Caco-2 (cell line): ENCODE measurements at regions of chr3 and their contacts with region 1.

Region 1: GRCh38 chr3:124627501-124627908 is 102.7 kb upstream of the UMPS start:
- DNase-seq: peak; percentile 81 to 89
- H3K4me3 ChIP-seq: no peak overlapping the region
- H3K4me3 Mint-ChIP-seq: peak overlapping the region; percentile 46
- H3K27ac Mint-ChIP-seq: peak overlapping the region; percentile 62
- H3K4me1 ChIP-seq: peaks cover 70% of the 10 kb centered on the region
- H3K4me1 Mint-ChIP-seq: peaks cover 60% of the 10 kb centered on the region
- H3K27me3 ChIP-seq: no peaks in the 10 kb centered on the region
- H3K27me3 Mint-ChIP-seq: no peaks in the 10 kb centered on the region
- CTCF ChIP-seq: no peak

Region 2: DNA sequence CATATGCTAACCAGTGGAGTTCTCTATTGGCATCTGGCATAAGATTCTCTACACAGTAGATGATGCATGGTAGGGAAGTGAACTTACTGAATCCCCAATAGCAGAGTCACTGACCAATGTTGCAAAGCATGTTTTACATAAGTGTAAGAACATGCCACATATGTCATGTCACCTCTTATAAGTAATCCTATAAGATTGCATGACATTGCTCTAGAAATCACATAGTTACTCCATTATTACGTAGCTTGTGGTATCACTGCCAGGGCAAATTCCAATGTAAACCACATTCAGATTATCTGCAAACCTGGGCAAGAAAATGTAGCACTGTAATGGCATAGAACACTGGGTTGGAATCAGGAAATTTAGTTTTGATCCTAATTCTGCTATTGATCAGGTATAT is 95.4 kb before region 1 on chr3:
- CTCF ChIA-PET with region 1: no interaction called
- POLR2A ChIA-PET with region 1: no interaction called
- intact Hi-C with region 1: no loop called
- DNase-seq: no peak
- H3K4me3 ChIP-seq: no peak overlapping the region
- H3K4me3 Mint-ChIP-seq: no peak overlapping the region
- H3K27ac Mint-ChIP-seq: no peak overlapping the region
- H3K4me1 ChIP-seq: no peaks in the 10 kb centered on the region
- H3K4me1 Mint-ChIP-seq: no peaks in the 10 kb centered on the region
- H3K27me3 ChIP-seq: no peaks in the 10 kb centered on the region
- H3K27me3 Mint-ChIP-seq: peaks cover 5% of the 10 kb centered on the region
- CTCF ChIP-seq: no peak

Region 3: DNA sequence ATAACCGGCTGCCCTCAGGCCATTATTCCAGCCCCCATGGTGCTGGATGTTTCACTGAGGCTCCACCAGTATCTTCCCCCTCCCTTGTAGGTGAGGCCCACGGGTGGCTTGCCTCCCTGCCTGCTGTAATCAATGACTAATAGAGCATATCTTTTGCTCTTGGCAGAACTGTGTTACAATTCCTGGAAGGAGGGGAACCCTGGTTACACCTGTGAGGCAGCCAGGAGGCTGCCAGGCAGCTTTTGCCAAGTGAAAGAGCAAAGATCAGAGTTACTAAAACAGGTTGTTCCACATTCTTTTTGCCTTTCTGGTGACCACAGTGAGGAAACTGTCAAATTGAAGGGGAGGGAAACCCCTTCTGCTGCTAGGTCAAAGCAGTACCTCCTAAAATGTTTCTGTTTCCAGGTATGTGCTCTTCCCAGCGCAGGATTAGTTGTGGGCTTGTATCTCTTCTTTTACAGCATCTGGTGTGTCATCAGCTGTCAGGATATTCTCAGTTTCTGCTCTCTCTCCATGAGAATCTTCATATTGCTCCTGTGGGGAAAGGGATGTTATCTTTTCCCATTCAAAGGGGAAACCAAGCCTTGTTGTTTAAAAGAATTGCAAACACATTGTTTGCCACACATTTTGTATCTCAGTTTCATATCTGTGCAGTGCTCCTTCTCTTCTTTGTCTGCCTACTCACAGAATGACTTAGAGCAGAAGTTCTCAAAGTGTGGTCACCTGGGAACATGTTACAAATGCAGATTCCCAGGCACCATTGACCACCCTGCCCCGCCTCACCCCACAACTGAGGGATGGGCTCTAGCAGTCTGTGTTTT is 34.7 kb before region 1 on chr3:
- CTCF ChIA-PET with region 1: no interaction called
- POLR2A ChIA-PET with region 1: no interaction called
- intact Hi-C with region 1: loop called (anchors 1 kb)
- DNase-seq: peak; percentile 89 to 91
- H3K4me3 ChIP-seq: no peak overlapping the region
- H3K4me3 Mint-ChIP-seq: peak overlapping the region; percentile 69
- H3K27ac Mint-ChIP-seq: peak overlapping the region; percentile 95
- H3K4me1 ChIP-seq: peaks cover 70% of the 10 kb centered on the region
- H3K4me1 Mint-ChIP-seq: peaks cover 49% of the 10 kb centered on the region
- H3K27me3 ChIP-seq: no peaks in the 10 kb centered on the region
- H3K27me3 Mint-ChIP-seq: no peaks in the 10 kb centered on the region
- CTCF ChIP-seq: no peak

Region 4: DNA sequence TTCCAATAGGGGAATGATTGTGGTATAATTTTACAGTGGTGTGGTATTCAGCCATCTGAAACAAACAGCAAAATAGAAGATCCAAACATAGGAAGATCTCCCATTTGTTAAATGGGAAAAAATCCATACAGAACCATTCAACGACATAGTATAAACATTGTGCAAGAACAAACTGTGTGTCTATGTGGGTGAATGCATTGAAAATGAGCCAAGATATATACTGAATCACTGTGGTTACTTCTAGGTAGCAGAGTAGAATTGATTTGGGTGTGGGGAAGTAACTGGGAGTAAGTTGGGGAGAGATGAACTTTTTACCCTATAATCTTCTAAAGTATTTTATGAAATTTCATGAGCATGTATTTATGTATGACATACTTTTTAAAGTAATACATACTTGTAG is 20.3 kb before region 1 on chr3:
- CTCF ChIA-PET with region 1: no interaction called
- POLR2A ChIA-PET with region 1: no interaction called
- intact Hi-C with region 1: no loop called
- DNase-seq: no peak
- H3K4me3 ChIP-seq: no peak overlapping the region
- H3K4me3 Mint-ChIP-seq: no peak overlapping the region
- H3K27ac Mint-ChIP-seq: no peak overlapping the region
- H3K4me1 ChIP-seq: peaks cover 12% of the 10 kb centered on the region; the same call in 1 of the 2 replicates
- H3K4me1 Mint-ChIP-seq: peaks cover 44% of the 10 kb centered on the region
- H3K27me3 ChIP-seq: no peaks in the 10 kb centered on the region
- H3K27me3 Mint-ChIP-seq: no peaks in the 10 kb centered on the region
- CTCF ChIP-seq: no peak

Region 5: DNA sequence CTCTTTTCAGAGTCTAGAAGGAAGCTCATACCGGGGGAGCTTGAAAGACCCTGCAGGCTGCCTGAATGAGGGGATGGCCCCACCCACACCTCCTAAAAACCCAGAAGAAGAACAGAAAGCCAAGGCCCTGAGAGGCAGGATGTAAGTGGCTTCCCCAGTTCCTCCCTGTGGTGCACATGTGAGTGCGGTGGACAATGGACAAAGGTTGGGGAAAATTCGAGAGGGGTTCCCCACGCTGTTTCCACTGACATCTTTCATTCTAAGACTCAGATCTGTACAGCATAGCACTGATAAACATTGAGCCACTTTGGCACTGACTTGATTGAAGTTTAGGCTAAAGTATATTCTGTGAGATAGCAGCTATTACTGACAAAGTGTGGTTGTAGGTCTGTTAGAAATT is 23.3 kb after region 1 on chr3:
- CTCF ChIA-PET with region 1: no interaction called
- POLR2A ChIA-PET with region 1: no interaction called
- intact Hi-C with region 1: no loop called
- DNase-seq: no peak
- H3K4me3 ChIP-seq: no peak overlapping the region
- H3K4me3 Mint-ChIP-seq: no peak overlapping the region
- H3K27ac Mint-ChIP-seq: no peak overlapping the region
- H3K4me1 ChIP-seq: peaks cover 11% of the 10 kb centered on the region
- H3K4me1 Mint-ChIP-seq: peaks cover 22% of the 10 kb centered on the region
- H3K27me3 ChIP-seq: no peaks in the 10 kb centered on the region
- H3K27me3 Mint-ChIP-seq: no peaks in the 10 kb centered on the region
- CTCF ChIP-seq: no peak